Naive thymus-derived CD4-positive, alpha-beta T cell (primary cell): ENCODE measurements at regions of chr1 and their contacts with region 1.

Region 1: DNA sequence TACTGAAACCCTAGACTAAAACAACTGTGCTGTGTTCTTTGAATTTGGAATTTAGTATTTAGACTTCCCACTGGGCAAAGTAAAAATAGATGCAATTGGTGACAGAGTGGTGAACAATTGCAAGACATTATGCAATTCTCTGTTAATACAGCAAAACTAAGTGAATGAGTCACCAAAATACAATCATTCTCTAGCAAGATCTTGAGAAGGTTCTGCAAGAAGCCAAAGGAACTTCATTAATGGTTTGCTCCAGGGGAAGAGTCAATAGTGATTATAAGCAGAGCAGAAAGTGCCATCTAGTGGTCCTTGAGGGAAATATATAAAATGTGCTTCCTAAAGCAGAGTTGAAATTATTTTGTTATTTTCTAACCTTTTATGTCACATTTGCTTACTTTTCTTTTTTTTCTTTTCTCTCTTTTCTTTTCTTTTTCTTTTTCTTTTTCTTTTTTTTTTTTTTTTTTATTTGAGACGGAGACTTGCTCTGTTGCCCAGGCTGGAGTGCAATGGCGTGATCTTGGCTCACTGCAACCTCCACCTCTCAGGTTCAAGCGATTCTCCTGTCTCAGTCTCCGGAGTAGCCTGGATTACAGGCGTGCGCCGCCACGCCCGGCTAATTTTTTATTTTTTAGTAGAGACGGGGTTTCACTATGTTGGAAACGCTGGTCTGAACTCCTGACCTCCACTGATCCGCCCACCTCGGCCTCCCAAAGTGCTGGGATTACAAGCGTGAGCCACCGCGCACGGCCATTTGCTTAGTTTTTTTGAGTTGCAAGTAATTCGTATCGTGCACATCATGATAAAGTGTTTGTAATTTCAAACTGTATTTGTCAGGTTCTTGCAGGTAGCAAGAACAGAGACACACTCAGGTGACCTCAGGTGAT is 99.2 kb downstream of the CTH start:
- DNase-seq: peak in 7 of 9 donors; percentile 12 to 49 (median 25)
- ATAC-seq: peak; percentile 79
- H3K4me3 ChIP-seq: no peak overlapping the region
- H3K4me3 Mint-ChIP-seq: no peak overlapping the region
- H3K27ac ChIP-seq: no peak overlapping the region
- H3K27ac Mint-ChIP-seq: no peak overlapping the region
- H3K4me1 ChIP-seq: no peaks in the 10 kb centered on the region
- H3K4me1 Mint-ChIP-seq: no peaks in the 10 kb centered on the region
- H3K27me3 ChIP-seq: no peaks in the 10 kb centered on the region
- H3K27me3 Mint-ChIP-seq: peaks cover 0 to 21% (median 6%) of the 10 kb centered on the region in 5 donors

Region 2: GRCh38 chr1:70134148-70134547 is 376.1 kb before region 1 on chr1:
- CTCF ChIA-PET with region 1: interaction called, 5 read pairs
- POLR2A ChIA-PET with region 1: no interaction called
- intact Hi-C with region 1: loop called (anchors 1 kb)
- DNase-seq: no peak
- ATAC-seq: no peak
- H3K4me3 ChIP-seq: no peak overlapping the region
- H3K4me3 Mint-ChIP-seq: no peak overlapping the region
- H3K27ac ChIP-seq: no peak overlapping the region
- H3K27ac Mint-ChIP-seq: no peak overlapping the region
- H3K4me1 ChIP-seq: no peaks in the 10 kb centered on the region
- H3K4me1 Mint-ChIP-seq: peaks cover 0 to 4% (median 0%) of the 10 kb centered on the region in 7 donors
- H3K27me3 ChIP-seq: no peaks in the 10 kb centered on the region
- H3K27me3 Mint-ChIP-seq: peaks cover 0 to 25% (median 9%) of the 10 kb centered on the region in 5 donors

Region 3: GRCh38 chr1:70319750-70320149 is 190.5 kb before region 1 on chr1:
- CTCF ChIA-PET with region 1: no interaction called
- POLR2A ChIA-PET with region 1: no interaction called
- intact Hi-C with region 1: loop called in 1 of 2 experiments (anchors 10 kb)
- DNase-seq: no peak
- ATAC-seq: no peak
- H3K4me3 ChIP-seq: no peak overlapping the region
- H3K4me3 Mint-ChIP-seq: no peak overlapping the region
- H3K27ac ChIP-seq: no peak overlapping the region
- H3K27ac Mint-ChIP-seq: peak overlapping the region in 2 of 9 donors; percentile 1 to 14
- H3K4me1 ChIP-seq: no peaks in the 10 kb centered on the region
- H3K4me1 Mint-ChIP-seq: peaks cover 10 to 35% (median 21%) of the 10 kb centered on the region in 7 donors
- H3K27me3 ChIP-seq: no peaks in the 10 kb centered on the region
- H3K27me3 Mint-ChIP-seq: no peaks in the 10 kb centered on the region

Region 4: DNA sequence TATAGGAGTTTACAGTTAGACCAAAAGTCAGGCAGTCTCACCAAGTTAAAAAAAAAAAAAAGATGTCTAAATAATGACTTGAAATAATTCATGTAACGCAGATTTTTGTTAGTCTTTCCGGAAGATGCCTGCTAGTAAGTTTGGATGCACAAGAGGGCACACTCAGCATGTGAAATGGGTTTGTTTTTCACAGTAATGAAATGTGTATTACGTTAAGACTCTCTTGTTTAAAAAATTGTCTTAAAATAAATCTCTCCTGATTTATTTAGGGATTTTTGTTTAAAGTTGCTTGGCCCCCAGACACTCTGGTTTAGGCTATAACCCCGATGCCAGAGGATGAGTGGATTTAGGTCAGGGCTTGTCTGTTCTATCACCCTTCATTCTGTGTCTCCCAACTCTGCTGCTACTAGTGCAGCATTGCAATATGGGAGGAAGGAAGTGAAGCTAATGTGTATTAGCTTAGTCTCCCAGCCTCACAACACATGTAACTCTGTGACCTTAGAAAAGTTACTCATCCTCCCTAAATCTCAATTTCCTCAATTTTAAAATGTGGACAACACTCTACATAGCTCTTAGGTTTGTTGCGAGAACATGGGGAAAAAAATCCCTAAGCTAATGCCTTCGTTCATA is 73.5 kb before region 1 on chr1:
- CTCF ChIA-PET with region 1: no interaction called
- POLR2A ChIA-PET with region 1: no interaction called
- intact Hi-C with region 1: no loop called
- DNase-seq: no peak
- ATAC-seq: no peak
- H3K4me3 ChIP-seq: no peak overlapping the region
- H3K4me3 Mint-ChIP-seq: no peak overlapping the region
- H3K27ac ChIP-seq: no peak overlapping the region
- H3K27ac Mint-ChIP-seq: no peak overlapping the region
- H3K4me1 ChIP-seq: no peaks in the 10 kb centered on the region
- H3K4me1 Mint-ChIP-seq: peaks cover 0 to 9% (median 0%) of the 10 kb centered on the region in 7 donors
- H3K27me3 ChIP-seq: no peaks in the 10 kb centered on the region
- H3K27me3 Mint-ChIP-seq: no peaks in the 10 kb centered on the region